ENCODE measurements at regions of chrX and their contacts with region 1.

Region 1: GRCh38 chrX:38327007-38327774 is at the start of gene RPGR:
- DNase-seq: peak; percentile 94
- ATAC-seq: peak; percentile 96
- H3K4me3 ChIP-seq: peak within 1 kb of the TSS; percentile 51 to 65 (median 62)
- H3K4me3 Mint-ChIP-seq: peak within 1 kb of the TSS; percentile 95
- H3K27ac ChIP-seq: peak within 1 kb of the TSS; percentile 77 to 99
- H3K27ac Mint-ChIP-seq: peak within 1 kb of the TSS; percentile 99
- H3K4me1 ChIP-seq: peaks cover 0 to 11% of the 10 kb centered on the region in 2 donors
- H3K4me1 Mint-ChIP-seq: peaks cover 19% of the 10 kb centered on the region
- H3K27me3 ChIP-seq: no peaks in the 10 kb centered on the region
- H3K27me3 Mint-ChIP-seq: no peaks in the 10 kb centered on the region
- CTCF ChIP-seq: peak; percentile 77
- total RNA-seq, gene RPGR: 26.3 and 26.8 TPM in 2 replicates

Region 2: GRCh38 chrX:37509349-37509748 is 817.8 kb before region 1 on chrX:
- CTCF ChIA-PET with region 1: no interaction called
- POLR2A ChIA-PET with region 1: no interaction called
- intact Hi-C with region 1: loop called (anchors 5 kb)
- DNase-seq: peak; percentile 8
- ATAC-seq: no peak
- H3K4me3 ChIP-seq: no peak overlapping the region
- H3K4me3 Mint-ChIP-seq: no peak overlapping the region
- H3K27ac ChIP-seq: no peak overlapping the region
- H3K27ac Mint-ChIP-seq: no peak overlapping the region
- H3K4me1 ChIP-seq: no peaks in the 10 kb centered on the region
- H3K4me1 Mint-ChIP-seq: no peaks in the 10 kb centered on the region
- H3K27me3 ChIP-seq: peaks cover 0 to 3% (median 0%) of the 10 kb centered on the region in 4 experiments
- H3K27me3 Mint-ChIP-seq: peaks cover 7% of the 10 kb centered on the region
- CTCF ChIP-seq: peak; percentile 29

Region 3: GRCh38 chrX:37846934-37847732 is 480.1 kb before region 1 on chrX and contains the start of gene DYNLT3:
- CTCF ChIA-PET with region 1: no interaction called
- POLR2A ChIA-PET with region 1: no interaction called
- intact Hi-C with region 1: loop called (anchors 1 kb)
- DNase-seq: peak; percentile 86
- ATAC-seq: peak; percentile 99
- H3K4me3 ChIP-seq: peak within 1 kb of the TSS; percentile 58 to 82 (median 68)
- H3K4me3 Mint-ChIP-seq: peak within 1 kb of the TSS; percentile 91
- H3K27ac ChIP-seq: peak within 1 kb of the TSS; percentile 89 to 93
- H3K27ac Mint-ChIP-seq: peak within 1 kb of the TSS; percentile 95
- H3K4me1 ChIP-seq: peaks cover 4 to 9% of the 10 kb centered on the region in 2 donors
- H3K4me1 Mint-ChIP-seq: peaks cover 14% of the 10 kb centered on the region
- H3K27me3 ChIP-seq: peaks cover 0 to 8% (median 0%) of the 10 kb centered on the region in 4 experiments
- H3K27me3 Mint-ChIP-seq: no peaks in the 10 kb centered on the region
- CTCF ChIP-seq: no peak
- total RNA-seq, gene DYNLT3: 20.4 and 25.1 TPM in 2 replicates

Region 4: GRCh38 chrX:37926700-37927099 is 400.5 kb before region 1 on chrX:
- CTCF ChIA-PET with region 1: interaction called, 9 read pairs
- POLR2A ChIA-PET with region 1: no interaction called
- intact Hi-C with region 1: loop called (anchors 2 kb)
- DNase-seq: peak; percentile 5
- ATAC-seq: no peak
- H3K4me3 ChIP-seq: no peak overlapping the region
- H3K4me3 Mint-ChIP-seq: no peak overlapping the region
- H3K27ac ChIP-seq: no peak overlapping the region
- H3K27ac Mint-ChIP-seq: no peak overlapping the region
- H3K4me1 ChIP-seq: no peaks in the 10 kb centered on the region
- H3K4me1 Mint-ChIP-seq: no peaks in the 10 kb centered on the region
- H3K27me3 ChIP-seq: peaks cover 0 to 4% (median under 1%) of the 10 kb centered on the region in 4 experiments
- H3K27me3 Mint-ChIP-seq: peaks cover 18% of the 10 kb centered on the region
- CTCF ChIP-seq: peak; percentile 14

Region 5: DNA sequence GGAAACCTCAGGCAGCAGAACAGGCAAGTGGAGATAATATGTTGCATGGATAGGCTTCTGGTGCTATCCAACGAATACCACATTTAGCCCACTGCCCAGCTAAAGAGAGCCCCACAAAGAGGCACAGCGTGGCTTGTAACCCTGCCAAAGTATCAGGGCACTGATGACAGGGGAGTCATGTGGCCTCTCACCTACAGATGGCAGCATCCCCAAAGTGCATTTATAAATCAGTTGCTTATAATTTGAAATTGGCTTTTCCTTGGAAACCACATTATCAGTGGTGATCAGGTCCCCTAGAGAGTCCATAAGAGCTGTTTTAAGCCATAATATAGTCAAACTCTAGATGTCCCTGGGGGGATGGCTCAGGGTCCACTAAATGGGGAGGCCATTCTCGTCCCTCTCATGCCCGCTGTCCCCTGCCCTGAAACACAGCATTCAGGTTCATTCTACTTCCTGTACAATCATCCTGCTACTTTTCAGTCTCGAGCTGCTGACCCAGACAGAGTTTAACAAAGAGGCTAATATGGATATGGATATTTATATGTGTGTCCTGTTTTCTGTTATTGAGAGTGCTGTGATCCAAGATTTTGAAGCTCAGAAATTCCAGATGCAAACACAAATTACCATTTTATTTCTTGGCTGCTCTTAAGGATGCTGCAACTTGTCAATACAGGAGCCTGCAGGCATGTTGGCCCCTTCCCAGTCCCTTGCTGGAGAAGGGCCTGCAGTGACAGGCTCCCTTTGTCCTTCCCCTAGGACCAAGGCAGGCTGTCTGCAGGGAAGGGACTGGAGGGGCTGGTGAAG is 135.0 kb before region 1 on chrX:
- CTCF ChIA-PET with region 1: interaction called, 20 read pairs
- POLR2A ChIA-PET with region 1: no interaction called
- intact Hi-C with region 1: loop called (anchors 1 kb)
- DNase-seq: peak; percentile 13
- ATAC-seq: peak; percentile 36
- H3K4me3 ChIP-seq: no peak overlapping the region
- H3K4me3 Mint-ChIP-seq: no peak overlapping the region
- H3K27ac ChIP-seq: no peak overlapping the region
- H3K27ac Mint-ChIP-seq: no peak overlapping the region
- H3K4me1 ChIP-seq: no peaks in the 10 kb centered on the region
- H3K4me1 Mint-ChIP-seq: no peaks in the 10 kb centered on the region
- H3K27me3 ChIP-seq: peaks cover 0 to 9% (median 0%) of the 10 kb centered on the region in 4 experiments
- H3K27me3 Mint-ChIP-seq: peaks cover 11% of the 10 kb centered on the region
- CTCF ChIP-seq: peak; percentile 31

Region 6: GRCh38 chrX:38260231-38260630 is 67.0 kb before region 1 on chrX:
- CTCF ChIA-PET with region 1: interaction called, 8 read pairs
- POLR2A ChIA-PET with region 1: no interaction called
- intact Hi-C with region 1: loop called (anchors 2 kb)
- DNase-seq: no peak
- ATAC-seq: no peak
- H3K4me3 ChIP-seq: no peak overlapping the region
- H3K4me3 Mint-ChIP-seq: no peak overlapping the region
- H3K27ac ChIP-seq: no peak overlapping the region
- H3K27ac Mint-ChIP-seq: no peak overlapping the region
- H3K4me1 ChIP-seq: no peaks in the 10 kb centered on the region
- H3K4me1 Mint-ChIP-seq: no peaks in the 10 kb centered on the region
- H3K27me3 ChIP-seq: no peaks in the 10 kb centered on the region
- H3K27me3 Mint-ChIP-seq: no peaks in the 10 kb centered on the region
- CTCF ChIP-seq: no peak

Region 7: DNA sequence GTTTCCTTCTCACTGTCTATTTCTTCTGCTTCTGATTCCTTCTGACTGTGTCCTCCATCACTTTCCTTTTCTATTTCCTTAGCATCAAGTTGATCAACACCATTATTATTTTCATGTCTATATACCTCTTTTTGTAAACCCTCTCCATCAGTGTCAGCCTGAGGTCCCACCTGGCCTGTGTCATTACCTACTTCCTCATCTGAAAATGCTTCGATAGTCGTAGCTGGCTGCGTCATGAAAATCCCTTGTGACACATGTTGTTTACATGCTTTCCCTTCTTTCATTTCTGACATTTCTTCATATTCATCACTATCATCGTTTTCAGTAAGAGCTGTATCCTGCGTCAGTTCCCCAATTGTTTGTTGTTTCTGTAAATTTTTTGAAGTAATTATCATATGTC is 39.5 kb before region 1 on chrX:
- CTCF ChIA-PET with region 1: interaction called, 6 read pairs
- POLR2A ChIA-PET with region 1: no interaction called
- intact Hi-C with region 1: loop called (anchors 5 kb)
- DNase-seq: peak; percentile 67
- ATAC-seq: peak; percentile 90
- H3K4me3 ChIP-seq: no peak overlapping the region
- H3K4me3 Mint-ChIP-seq: peak overlapping the region; percentile 74
- H3K27ac ChIP-seq: no peak overlapping the region
- H3K27ac Mint-ChIP-seq: peak overlapping the region; percentile 92
- H3K4me1 ChIP-seq: no peaks in the 10 kb centered on the region
- H3K4me1 Mint-ChIP-seq: peaks cover 16% of the 10 kb centered on the region
- H3K27me3 ChIP-seq: no peaks in the 10 kb centered on the region
- H3K27me3 Mint-ChIP-seq: no peaks in the 10 kb centered on the region
- CTCF ChIP-seq: no peak

Measured in B cell (primary cell).